Right lobe of liver (tissue), 6 donors: ENCODE measurements at regions of chr17 and their contacts with region 1.

Region 1: DNA sequence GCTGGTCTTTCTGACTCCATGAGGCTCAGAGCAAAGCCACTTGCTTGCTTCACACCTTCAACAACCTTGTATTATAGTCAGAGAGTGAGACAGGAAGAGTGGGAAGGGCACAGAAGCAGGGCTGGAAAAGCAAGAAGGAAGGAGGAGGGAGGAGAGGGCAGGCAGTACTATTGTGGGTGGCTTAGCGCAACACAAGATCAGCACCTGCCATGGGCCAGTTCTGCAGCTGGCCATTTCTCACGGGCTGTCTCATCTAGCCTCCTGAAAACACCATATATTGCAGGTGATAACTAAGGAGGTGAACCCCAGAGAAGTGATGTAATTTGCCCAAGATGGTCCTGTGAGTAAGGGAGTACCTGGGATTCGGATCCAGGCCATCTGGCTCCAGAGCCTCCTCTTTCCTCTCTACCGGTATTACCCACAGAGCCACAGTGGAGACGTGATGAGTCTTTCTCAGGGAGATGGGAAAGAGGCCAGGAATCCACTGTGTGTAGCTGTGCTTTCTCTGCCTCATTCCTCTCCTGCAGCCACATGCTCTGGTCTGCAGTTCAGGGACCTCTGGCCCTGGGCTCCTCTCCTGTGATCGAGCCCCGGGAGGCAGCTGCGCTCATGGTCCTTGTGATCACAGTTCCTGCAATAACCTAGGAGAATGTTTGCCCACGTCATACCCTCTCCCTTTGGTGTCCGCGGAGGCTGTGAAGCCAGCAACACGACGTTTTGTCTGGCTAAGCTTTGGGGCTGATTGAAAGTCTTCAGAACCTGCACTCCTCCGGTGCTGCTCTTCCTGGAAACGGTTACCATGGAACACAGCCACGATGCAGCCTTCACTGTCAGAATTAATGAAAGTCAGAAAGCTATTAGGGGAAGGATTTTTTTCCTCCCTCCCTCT is 178.1 kb upstream of the CCL2 start:
- DNase-seq: no peak
- ATAC-seq: no peak
- H3K4me3 ChIP-seq: no peak overlapping the region
- H3K27ac ChIP-seq: no peak overlapping the region
- H3K4me1 ChIP-seq: no peaks in the 10 kb centered on the region
- H3K27me3 ChIP-seq: no peaks in the 10 kb centered on the region
- CTCF ChIP-seq: no peak
- POLR2A ChIP-seq: no peak

Region 2: DNA sequence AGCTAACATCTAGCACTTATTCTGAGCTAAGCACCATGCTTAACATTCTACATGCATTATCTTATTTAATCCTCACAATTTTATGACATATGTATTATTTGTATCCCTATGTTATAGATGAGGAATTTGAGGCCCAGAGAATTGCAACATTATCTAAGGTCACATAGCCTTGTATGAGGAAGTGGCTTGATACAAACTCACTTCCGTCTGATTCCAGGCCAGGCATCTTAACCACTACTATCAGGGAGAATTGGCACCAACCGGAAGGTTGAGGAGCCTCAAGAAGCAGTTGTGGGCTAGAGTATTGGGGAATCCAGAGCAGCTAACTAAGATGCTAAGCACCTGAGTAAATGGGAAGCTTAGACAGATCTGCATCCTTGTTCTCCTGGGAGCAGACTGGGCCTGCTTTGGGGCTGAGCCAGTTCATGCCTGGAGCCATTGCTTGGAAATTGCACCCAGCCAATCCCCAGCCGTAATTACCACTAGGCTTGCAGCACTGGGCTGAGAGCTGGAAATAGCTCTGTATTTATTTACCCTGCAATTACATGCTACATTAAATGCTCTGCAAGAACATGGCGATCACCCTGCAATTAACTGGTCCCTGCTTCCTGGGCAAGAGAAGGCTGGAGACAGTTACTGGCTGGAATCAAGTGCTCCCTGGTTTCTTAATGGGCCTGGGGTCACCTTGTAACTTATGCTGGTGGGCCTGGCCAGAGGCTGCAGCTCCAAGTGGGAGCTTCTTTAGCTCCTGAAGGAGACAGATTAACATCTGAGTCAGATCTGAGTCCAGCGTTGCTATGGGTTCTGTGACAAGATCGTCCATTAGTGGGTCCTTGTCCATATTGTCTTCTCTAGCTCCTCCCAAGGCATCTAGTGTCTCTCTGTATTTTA is 95.0 kb before region 1 on chr17:
- intact Hi-C with region 1: no loop called
- DNase-seq: no peak
- ATAC-seq: no peak
- H3K4me3 ChIP-seq: no peak overlapping the region
- H3K27ac ChIP-seq: no peak overlapping the region
- H3K4me1 ChIP-seq: no peaks in the 10 kb centered on the region
- H3K27me3 ChIP-seq: no peaks in the 10 kb centered on the region
- CTCF ChIP-seq: no peak
- POLR2A ChIP-seq: no peak

Region 3: DNA sequence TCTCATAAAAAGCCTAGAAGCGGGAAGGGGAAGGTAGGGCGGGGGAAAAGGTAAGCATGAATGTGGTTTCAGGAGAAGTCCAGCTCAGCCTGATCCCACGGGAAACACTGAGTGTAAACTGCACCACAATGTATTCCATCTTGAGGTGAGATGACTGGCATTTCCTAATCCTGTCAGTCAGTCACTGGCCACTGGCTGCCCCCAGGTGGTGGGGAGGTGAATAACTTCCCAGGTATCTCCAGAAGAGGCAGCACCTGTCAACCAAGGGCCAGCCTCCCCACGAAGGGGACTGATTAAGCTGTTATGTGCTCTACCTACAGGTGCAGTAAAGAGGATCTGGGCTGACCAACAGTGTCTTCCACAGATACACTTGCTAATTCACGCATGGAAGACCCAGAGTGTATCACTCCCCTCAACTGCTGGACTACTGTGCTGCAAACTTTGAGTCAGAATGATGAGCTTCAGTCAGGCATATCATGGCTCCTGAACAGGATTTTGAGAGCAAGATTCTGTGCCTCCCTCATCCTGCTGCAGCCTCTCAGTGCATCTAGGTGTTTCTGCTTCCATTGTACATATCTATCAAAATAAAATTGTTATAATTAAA is 69.6 kb after region 1 on chr17:
- intact Hi-C with region 1: loop called in 1 of 2 experiments (anchors 10 kb)
- DNase-seq: peak; percentile 51 to 77 (median 74)
- ATAC-seq: peak; percentile 74 to 95 (median 94)
- H3K4me3 ChIP-seq: no peak overlapping the region
- H3K27ac ChIP-seq: no peak overlapping the region
- H3K4me1 ChIP-seq: no peaks in the 10 kb centered on the region
- H3K27me3 ChIP-seq: no peaks in the 10 kb centered on the region
- CTCF ChIP-seq: peak; percentile 38 to 88 (median 80)
- POLR2A ChIP-seq: no peak

Region 4: GRCh38 chr17:34314279-34314678 is 237.3 kb after region 1 on chr17:
- intact Hi-C with region 1: no loop called
- DNase-seq: no peak
- ATAC-seq: peak in 3 of 4 donors; percentile 28 to 59 (median 29)
- H3K4me3 ChIP-seq: no peak overlapping the region
- H3K27ac ChIP-seq: no peak overlapping the region
- H3K4me1 ChIP-seq: no peaks in the 10 kb centered on the region
- H3K27me3 ChIP-seq: no peaks in the 10 kb centered on the region
- CTCF ChIP-seq: no peak
- POLR2A ChIP-seq: no peak